Activated CD4-positive, alpha-beta T cell treated with anti-CD3 and anti-CD28 coated beads for 36 hours (primary cell): ENCODE measurements at regions of chr10 and their contacts with region 1.

Region 1: DNA sequence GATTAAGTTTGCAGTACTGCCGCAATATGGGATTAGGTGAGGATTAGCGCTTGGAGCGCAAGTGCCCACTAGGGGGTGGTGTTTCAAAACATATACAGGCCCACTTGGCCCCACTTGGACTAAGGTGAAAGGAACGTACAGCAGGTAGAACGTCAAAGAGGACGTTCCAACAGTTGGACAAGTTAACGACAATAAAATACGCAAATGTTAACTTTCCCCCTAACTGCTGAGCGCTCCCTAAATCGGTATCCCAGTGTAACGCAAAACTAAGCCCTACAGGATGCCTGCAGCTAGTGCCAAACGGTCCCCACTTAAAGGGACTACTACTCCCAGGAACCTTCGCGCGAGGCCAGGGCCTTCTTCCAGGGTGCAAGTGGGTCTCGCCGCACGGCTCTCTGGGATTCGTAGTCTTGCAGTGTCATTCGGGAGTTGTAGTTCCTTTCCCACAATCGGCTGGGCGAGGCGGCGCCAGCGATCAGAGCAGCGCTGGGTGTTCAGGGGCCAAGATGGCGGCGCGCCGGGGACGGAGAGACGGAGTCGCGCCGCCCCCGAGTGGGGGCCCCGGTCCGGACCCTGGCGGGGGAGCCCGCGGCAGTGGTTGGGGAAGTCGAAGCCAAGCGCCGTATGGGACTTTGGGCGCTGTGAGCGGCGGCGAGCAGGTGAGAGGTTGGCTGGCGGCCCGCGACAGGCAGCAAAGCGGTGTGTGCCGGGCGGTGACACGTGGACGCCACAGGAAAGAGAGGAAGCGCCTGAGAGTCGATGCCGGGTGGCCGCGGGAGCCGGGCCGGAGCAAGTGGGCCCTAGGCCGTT is at the start of gene PPRC1:
- DNase-seq: peak; percentile 99
- ATAC-seq: peak; percentile 96
- H3K4me3 Mint-ChIP-seq: peak within 1 kb of the TSS; percentile 94
- H3K27ac Mint-ChIP-seq: peak within 1 kb of the TSS; percentile 94
- H3K4me1 Mint-ChIP-seq: peaks cover 38% of the 10 kb centered on the region
- H3K27me3 Mint-ChIP-seq: no peaks in the 10 kb centered on the region
- total RNA-seq, gene PPRC1: 61.3 to 74.7 TPM

Region 2: GRCh38 chr10:101818119-101818871 is 314.5 kb before region 1 on chr10 and contains the start of gene OGA:
- CTCF ChIA-PET with region 1: no interaction called
- POLR2A ChIA-PET with region 1: no interaction called
- intact Hi-C with region 1: loop called in 1 of 2 experiments (anchors 1 kb)
- DNase-seq: peak; percentile 99
- ATAC-seq: peak; percentile 89
- H3K4me3 Mint-ChIP-seq: peak within 1 kb of the TSS; percentile 89
- H3K27ac Mint-ChIP-seq: peak within 1 kb of the TSS; percentile 83
- H3K4me1 Mint-ChIP-seq: peaks cover 40% of the 10 kb centered on the region
- H3K27me3 Mint-ChIP-seq: no peaks in the 10 kb centered on the region
- total RNA-seq, gene OGA: 113 to 124 TPM

Region 3: GRCh38 chr10:102055647-102056419 is 76.9 kb before region 1 on chr10 and contains the start of gene ARMH3:
- CTCF ChIA-PET with region 1: interaction called, 3 read pairs
- POLR2A ChIA-PET with region 1: interaction called, 3 read pairs
- intact Hi-C with region 1: loop called (anchors 1 kb)
- DNase-seq: peak; percentile 96
- ATAC-seq: peak; percentile 98
- H3K4me3 Mint-ChIP-seq: peak within 1 kb of the TSS; percentile 95
- H3K27ac Mint-ChIP-seq: peak within 1 kb of the TSS; percentile 93
- H3K4me1 Mint-ChIP-seq: peaks cover 40% of the 10 kb centered on the region
- H3K27me3 Mint-ChIP-seq: no peaks in the 10 kb centered on the region
- total RNA-seq, gene ARMH3: 16.0 to 21.0 TPM

Region 4: DNA sequence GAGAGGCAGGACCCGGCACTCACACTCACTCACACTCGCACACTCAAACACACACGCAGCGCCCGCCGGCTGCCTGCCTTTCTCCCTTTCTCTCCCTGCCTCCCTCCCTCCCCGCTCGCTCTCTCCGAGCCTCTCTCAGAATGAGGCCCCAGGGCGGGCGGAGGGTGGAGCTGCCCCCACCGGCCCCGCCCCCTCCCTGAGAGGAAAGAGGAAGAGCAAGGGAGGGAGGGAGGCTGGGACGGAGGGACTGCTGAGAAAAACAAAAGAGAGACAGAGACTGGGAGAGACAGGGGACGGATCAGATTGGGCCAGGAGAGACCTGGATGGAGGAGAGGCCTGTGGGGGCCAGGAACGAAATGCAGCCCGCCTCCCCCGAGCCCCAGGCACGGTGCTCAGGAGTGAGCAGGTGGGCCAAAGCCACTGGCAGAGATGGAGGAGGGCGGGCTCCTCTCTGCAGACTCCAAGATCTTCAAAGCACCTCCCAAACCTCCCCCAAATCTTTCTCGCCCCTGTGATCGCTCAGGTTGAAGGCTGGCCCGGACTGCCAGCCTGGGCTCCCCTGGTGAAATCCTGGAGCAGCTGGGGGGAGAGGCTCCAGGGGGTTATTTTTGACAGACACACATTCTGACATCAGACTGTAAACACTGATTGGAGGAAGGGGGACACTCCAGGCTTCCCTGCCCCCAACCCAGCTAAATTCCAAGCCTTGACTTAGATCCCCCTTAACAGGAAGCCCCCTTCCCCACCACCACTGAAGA is 17.7 kb before region 1 on chr10:
- CTCF ChIA-PET with region 1: interaction called, 22 read pairs
- POLR2A ChIA-PET with region 1: interaction called, 12 read pairs
- intact Hi-C with region 1: loop called (anchors 1 kb)
- DNase-seq: peak; percentile 95
- ATAC-seq: peak; percentile 60
- H3K4me3 Mint-ChIP-seq: peak overlapping the region; percentile 81
- H3K27ac Mint-ChIP-seq: peak overlapping the region; percentile 97
- H3K4me1 Mint-ChIP-seq: peaks cover 55% of the 10 kb centered on the region
- H3K27me3 Mint-ChIP-seq: no peaks in the 10 kb centered on the region

Region 5: GRCh38 chr10:102231357-102232318 is 98.9 kb after region 1 on chr10:
- CTCF ChIA-PET with region 1: interaction called, 10 read pairs
- POLR2A ChIA-PET with region 1: no interaction called
- intact Hi-C with region 1: no loop called
- DNase-seq: peak; percentile 89
- ATAC-seq: peak; percentile 78
- H3K4me3 Mint-ChIP-seq: peak overlapping the region; percentile 63
- H3K27ac Mint-ChIP-seq: no peak overlapping the region
- H3K4me1 Mint-ChIP-seq: peaks cover 17% of the 10 kb centered on the region
- H3K27me3 Mint-ChIP-seq: peaks cover 43% of the 10 kb centered on the region

Region 6: DNA sequence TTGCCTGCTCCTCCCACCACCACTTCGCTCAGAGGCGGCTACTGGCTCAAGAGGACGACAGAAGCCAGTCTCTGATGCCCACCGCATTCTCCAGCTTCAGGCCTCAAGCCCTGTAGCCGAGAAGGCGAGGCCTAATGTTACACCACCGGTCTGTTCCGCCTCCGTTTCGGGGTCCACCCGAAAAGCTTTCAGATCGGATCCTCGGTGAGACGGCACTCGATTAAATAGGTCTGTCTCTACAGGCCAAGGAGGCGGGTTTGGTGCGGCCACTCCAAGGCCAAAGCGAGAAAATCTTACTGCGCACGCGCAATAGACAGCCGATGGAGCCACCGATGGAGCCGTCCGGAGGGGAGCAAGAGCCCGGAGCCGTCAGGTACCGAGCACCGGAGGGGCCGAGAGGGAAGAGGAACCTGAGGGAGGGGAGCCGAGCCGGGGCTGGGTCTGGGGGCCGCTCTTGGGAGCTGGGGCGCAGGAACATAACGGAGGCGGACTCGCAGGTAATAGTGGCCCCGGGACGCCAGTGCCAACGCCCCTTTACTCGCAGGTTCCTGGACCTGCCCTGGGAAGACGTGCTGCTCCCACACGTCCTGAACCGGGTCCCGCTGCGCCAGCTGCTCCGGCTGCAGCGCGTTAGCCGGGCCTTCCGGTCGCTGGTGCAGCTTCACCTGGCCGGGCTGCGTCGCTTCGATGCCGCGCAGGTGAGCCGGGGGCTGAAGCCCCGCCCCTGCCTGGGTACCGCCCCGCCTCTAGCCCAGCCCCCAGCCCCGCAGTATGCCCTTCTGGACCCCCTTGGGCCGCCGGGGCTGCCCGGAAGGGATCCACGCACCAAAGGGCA is 288.3 kb after region 1 on chr10 and contains the start of gene FBXL15:
- CTCF ChIA-PET with region 1: interaction called, 3 read pairs
- POLR2A ChIA-PET with region 1: no interaction called
- intact Hi-C with region 1: loop called in 1 of 2 experiments (anchors 2 kb)
- DNase-seq: peak; percentile 98
- ATAC-seq: peak; percentile 80
- H3K4me3 Mint-ChIP-seq: peak within 1 kb of the TSS; percentile 96
- H3K27ac Mint-ChIP-seq: peak within 1 kb of the TSS; percentile 87
- H3K4me1 Mint-ChIP-seq: peaks cover 30% of the 10 kb centered on the region
- H3K27me3 Mint-ChIP-seq: peaks cover 14% of the 10 kb centered on the region
- total RNA-seq, gene FBXL15: 5.4 to 11.9 TPM

Region 7: GRCh38 chr10:102713814-102714620 is 581.2 kb after region 1 on chr10 and contains the start of gene ARL3:
- CTCF ChIA-PET with region 1: no interaction called
- POLR2A ChIA-PET with region 1: no interaction called
- intact Hi-C with region 1: loop called in 1 of 2 experiments (anchors 2 kb)
- DNase-seq: peak; percentile 99
- ATAC-seq: peak; percentile 90
- H3K4me3 Mint-ChIP-seq: peak within 1 kb of the TSS; percentile 82
- H3K27ac Mint-ChIP-seq: peak within 1 kb of the TSS; percentile 81
- H3K4me1 Mint-ChIP-seq: peaks cover 59% of the 10 kb centered on the region
- H3K27me3 Mint-ChIP-seq: no peaks in the 10 kb centered on the region
- total RNA-seq, gene ARL3: 6.4 to 6.9 TPM